HCT116 (cell line): ENCODE measurements at regions of chr11 and their contacts with region 1.

Region 1: GRCh38 chr11:13772223-13773046 is 104.0 kb downstream of the FAR1 start:
- DNase-seq: peak; percentile 67
- ATAC-seq: peak; percentile 86
- H3K4me3 ChIP-seq: no peak overlapping the region
- H3K27ac ChIP-seq: no peak overlapping the region
- H3K4me1 ChIP-seq: no peaks in the 10 kb centered on the region
- H3K27me3 ChIP-seq: no peaks in the 10 kb centered on the region
- CTCF ChIP-seq: peak; percentile 27 to 85 (median 75); a peak in 5 of 6 replicates
- POLR2A ChIP-seq: no peak
- RAD21 ChIP-seq: peak; percentile 94

Region 2: GRCh38 chr11:13668102-13668956 is 104.1 kb before region 1 on chr11 and contains the start of gene FAR1:
- CTCF ChIA-PET with region 1: no interaction called
- POLR2A ChIA-PET with region 1: no interaction called
- RAD21 ChIA-PET with region 1: no interaction called
- intact Hi-C with region 1: no loop called
- DNase-seq: peak; percentile 95
- ATAC-seq: peak; percentile 93
- H3K4me3 ChIP-seq: peak within 1 kb of the TSS; percentile 90 to 91
- H3K27ac ChIP-seq: peak within 1 kb of the TSS; percentile 64
- H3K4me1 ChIP-seq: peaks cover 5 to 24% of the 10 kb centered on the region in 2 experiments; a peak in 3 of 4 replicates
- H3K27me3 ChIP-seq: no peaks in the 10 kb centered on the region
- CTCF ChIP-seq: peak in 2 of 3 experiments; percentile 45 to 51; a peak in 4 of 6 replicates
- POLR2A ChIP-seq: no peak
- RAD21 ChIP-seq: no peak
- total RNA-seq, gene FAR1: 74.3 TPM

Region 3: DNA sequence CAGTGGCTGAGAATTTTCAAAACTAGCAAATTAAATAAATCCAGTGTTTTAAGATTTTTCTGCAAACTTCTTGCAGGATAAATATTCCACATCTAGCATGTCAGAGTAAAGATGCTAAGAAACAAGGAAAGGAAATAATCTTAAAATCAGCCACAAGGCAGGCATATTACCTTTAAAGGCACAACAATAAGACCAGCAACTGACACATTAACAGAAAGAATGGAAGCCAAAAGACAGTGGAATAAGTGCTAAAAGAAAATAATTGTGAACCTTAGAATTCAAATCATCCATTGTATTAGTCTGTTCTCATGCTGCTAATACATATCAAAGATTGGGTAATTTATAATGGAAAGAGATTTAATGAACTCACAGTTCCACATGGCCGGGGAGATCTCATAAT is 28.5 kb after region 1 on chr11:
- CTCF ChIA-PET with region 1: no interaction called
- POLR2A ChIA-PET with region 1: no interaction called
- RAD21 ChIA-PET with region 1: no interaction called
- intact Hi-C with region 1: no loop called
- DNase-seq: no peak
- ATAC-seq: no peak
- H3K4me3 ChIP-seq: no peak overlapping the region
- H3K27ac ChIP-seq: no peak overlapping the region
- H3K4me1 ChIP-seq: no peaks in the 10 kb centered on the region
- H3K27me3 ChIP-seq: no peaks in the 10 kb centered on the region
- CTCF ChIP-seq: no peak
- POLR2A ChIP-seq: no peak
- RAD21 ChIP-seq: no peak

Region 4: DNA sequence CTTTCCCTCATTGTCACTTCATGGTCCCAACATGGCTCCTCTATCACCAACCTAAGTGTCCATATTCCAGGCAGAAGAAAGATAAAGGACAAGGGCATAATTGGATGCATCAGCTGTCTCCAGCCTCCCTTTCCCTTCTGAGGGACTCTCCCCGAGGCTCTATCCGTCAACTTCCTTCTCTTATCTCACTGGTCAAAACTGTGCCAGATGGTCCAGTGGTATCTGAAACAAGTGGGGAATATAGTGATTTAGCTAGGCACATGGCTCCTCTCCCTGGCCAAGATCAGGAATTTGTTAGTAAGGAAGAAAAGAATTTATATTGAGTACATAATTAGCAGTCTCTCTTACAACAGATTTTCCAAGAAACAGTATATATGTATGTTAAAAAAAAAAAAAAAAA is 177.4 kb after region 1 on chr11:
- CTCF ChIA-PET with region 1: interaction called, 9 read pairs
- POLR2A ChIA-PET with region 1: no interaction called
- RAD21 ChIA-PET with region 1: interaction called, 3 read pairs
- intact Hi-C with region 1: loop called (anchors 1 kb)
- DNase-seq: no peak
- ATAC-seq: no peak
- H3K4me3 ChIP-seq: no peak overlapping the region
- H3K27ac ChIP-seq: no peak overlapping the region
- H3K4me1 ChIP-seq: peaks cover 0 to 5% of the 10 kb centered on the region in 2 experiments; a peak in 1 of 4 replicates
- H3K27me3 ChIP-seq: peaks cover 4% of the 10 kb centered on the region; the same call in 1 of the 2 replicates
- CTCF ChIP-seq: peak in 1 of 3 experiments; percentile 34; a peak in 1 of 6 replicates
- POLR2A ChIP-seq: no peak
- RAD21 ChIP-seq: peak; percentile 65

Region 5: GRCh38 chr11:13955971-13956421 is 183.6 kb after region 1 on chr11:
- CTCF ChIA-PET with region 1: interaction called, 9 read pairs
- POLR2A ChIA-PET with region 1: no interaction called
- RAD21 ChIA-PET with region 1: no interaction called
- intact Hi-C with region 1: loop called (anchors 2 kb)
- DNase-seq: peak; percentile 54
- ATAC-seq: peak; percentile 84
- H3K4me3 ChIP-seq: no peak overlapping the region
- H3K27ac ChIP-seq: no peak overlapping the region
- H3K4me1 ChIP-seq: peaks cover 0 to 5% of the 10 kb centered on the region in 2 experiments; a peak in 1 of 4 replicates
- H3K27me3 ChIP-seq: peaks cover 25% of the 10 kb centered on the region; the same call in 1 of the 2 replicates
- CTCF ChIP-seq: peak; percentile 74 to 90 (median 86)
- POLR2A ChIP-seq: no peak
- RAD21 ChIP-seq: peak; percentile 92

Region 6: DNA sequence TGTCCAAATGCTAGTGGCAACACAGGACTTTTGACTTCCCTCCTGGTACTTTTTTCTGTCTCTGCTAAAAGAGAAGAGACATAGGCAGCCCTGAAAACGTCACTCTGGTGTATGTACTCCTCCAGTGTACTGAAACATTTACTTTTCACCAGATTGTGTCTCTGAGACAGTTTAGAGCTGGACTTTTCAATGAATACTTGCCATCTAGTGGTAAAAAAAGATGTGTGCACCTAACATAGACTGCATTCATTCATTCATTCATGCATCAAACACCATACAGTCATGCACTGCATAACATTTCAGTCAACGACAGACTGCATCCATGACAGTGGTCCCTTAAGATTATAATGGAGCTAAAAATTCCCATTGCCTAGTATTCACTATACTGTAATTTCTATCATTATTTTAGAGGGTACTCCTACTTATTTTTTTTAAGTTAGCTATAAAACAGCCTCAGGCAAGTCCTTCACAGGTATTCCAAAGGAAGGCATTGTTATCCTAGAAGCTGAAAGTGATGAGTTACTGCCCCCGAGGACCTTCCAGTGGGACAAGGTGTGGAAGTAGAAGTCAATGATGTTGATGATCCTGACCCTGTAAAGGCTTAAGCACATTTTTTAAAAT is 376.3 kb after region 1 on chr11:
- CTCF ChIA-PET with region 1: interaction called, 17 read pairs
- POLR2A ChIA-PET with region 1: no interaction called
- RAD21 ChIA-PET with region 1: interaction called in 1 of 2 experiments, 3 read pairs
- intact Hi-C with region 1: loop called (anchors 1 kb)
- DNase-seq: peak; percentile 29
- ATAC-seq: peak; percentile 98
- H3K4me3 ChIP-seq: no peak overlapping the region
- H3K27ac ChIP-seq: no peak overlapping the region
- H3K4me1 ChIP-seq: no peaks in the 10 kb centered on the region
- H3K27me3 ChIP-seq: 0 out of 2 replicates have a peak, but pooled peaks cover 7% of the 10 kb centered on the region
- CTCF ChIP-seq: peak; percentile 56 to 73 (median 70)
- POLR2A ChIP-seq: no peak
- RAD21 ChIP-seq: peak; percentile 79